Gastrocnemius medialis (tissue), 4 donors: ENCODE measurements at regions of chr19 and their contacts with region 1.

Region 1: DNA sequence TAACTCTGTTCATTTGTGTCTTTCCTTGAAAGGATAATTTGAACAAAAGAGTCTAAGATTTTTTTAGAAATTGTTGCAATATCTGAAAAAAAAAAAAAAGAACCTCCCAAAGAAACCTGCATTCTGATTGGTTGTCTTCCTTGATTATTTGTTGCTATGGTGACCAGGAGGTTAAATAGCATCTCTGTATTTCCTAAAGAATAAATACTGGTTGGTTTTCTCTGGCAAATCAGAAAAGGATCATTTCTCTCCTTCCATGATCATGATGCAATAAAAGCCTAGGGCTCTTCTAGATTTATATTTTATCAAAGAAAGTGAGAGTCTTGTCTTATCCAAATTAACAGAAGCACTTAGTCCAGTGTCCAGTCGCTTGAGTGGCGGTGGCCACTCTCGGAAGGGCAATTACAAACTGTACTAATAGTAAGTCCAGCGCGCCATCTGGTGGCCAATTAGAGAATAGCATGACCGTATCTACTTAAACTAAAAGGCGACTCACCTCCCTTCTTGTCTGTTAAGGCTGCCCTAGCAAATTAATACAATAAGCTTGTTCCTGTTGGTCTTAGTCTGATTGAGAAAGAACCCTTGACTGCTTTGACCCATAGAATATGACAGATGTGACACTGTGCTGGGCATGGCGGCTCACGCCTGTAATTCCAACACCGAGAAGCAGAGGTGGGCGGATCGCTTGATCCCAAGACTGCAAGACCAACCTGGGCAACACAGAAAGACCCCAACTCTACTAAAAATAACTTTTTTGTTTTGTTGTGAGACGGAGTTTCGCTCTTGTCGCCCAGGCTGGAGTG is 47.0 kb upstream of the PNMA8B start:
- DNase-seq: peak; percentile 76 to 87
- ATAC-seq: peak; percentile 79 to 91
- H3K4me3 ChIP-seq: no peak overlapping the region
- H3K27ac ChIP-seq: no peak overlapping the region
- H3K4me1 ChIP-seq: peaks cover 0 to 5% of the 10 kb centered on the region in 2 donors
- H3K27me3 ChIP-seq: no peaks in the 10 kb centered on the region
- CTCF ChIP-seq: peak; percentile 89 to 91 (median 90)
- POLR2A ChIP-seq: no peak

Region 2: GRCh38 chr19:46471116-46471733 is 71.4 kb before region 1 on chr19 and contains the start of gene PNMA8A:
- in situ Hi-C with region 1: no loop called
- intact Hi-C with region 1: no loop called
- DNase-seq: peak in 1 of 2 donors; percentile 20
- ATAC-seq: peak; percentile 33 to 57
- H3K4me3 ChIP-seq: peak within 1 kb of the TSS; percentile 30 to 53 (median 46)
- H3K27ac ChIP-seq: peak within 1 kb of the TSS; percentile 28 to 55 (median 36)
- H3K4me1 ChIP-seq: peaks cover 0 to 3% of the 10 kb centered on the region in 2 donors
- H3K27me3 ChIP-seq: peaks cover 0 to 15% (median 3%) of the 10 kb centered on the region in 3 donors
- CTCF ChIP-seq: no peak
- POLR2A ChIP-seq: no peak
- total RNA-seq, gene PNMA8A: 0.13 to 0.83 (median 0.60) TPM in 3 of 4 donors, not detected in the other

Region 3: DNA sequence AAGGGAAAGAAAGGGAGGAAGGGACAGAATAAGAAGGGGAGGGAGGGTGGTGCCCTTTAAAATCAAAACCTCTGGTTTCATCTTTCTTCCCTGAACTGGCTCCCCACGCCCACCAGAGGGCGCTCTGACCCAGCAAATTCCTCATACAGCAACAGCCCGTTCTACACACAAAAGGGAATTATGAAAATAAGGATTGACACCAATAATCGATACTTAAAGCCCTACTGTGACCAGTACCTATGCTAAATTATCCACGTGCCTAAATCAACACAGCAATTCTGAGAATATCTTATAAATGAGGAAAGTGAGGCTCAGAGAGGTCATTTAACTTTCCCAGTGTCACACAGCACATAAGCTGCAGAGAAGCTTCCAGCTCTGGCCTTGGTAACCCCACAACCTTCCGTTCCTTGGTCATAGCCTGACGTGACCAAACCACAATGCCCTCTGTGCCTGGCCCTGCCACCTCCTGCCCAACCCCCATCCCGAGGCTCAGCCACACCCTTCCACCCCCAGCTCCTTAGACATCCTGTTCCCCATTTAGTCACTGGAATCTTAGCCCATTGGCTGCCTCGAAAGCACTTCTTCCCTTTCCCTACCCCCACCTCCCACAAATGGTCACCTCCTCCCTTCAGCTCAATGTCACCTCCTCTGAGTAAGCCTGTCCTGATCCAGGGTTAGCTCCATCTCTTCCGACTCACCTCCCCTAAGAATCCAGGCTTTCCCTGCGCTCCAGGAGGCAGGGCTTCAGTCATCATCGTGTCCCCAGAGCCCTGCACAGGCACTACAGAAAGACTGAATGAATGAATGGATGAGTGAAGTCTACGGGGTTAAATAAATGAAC is 12.8 kb before region 1 on chr19:
- in situ Hi-C with region 1: no loop called
- intact Hi-C with region 1: loop called (anchors 1 kb)
- DNase-seq: peak; percentile 34 to 47
- ATAC-seq: peak; percentile 30 to 54
- H3K4me3 ChIP-seq: no peak overlapping the region
- H3K27ac ChIP-seq: no peak overlapping the region
- H3K4me1 ChIP-seq: no peaks in the 10 kb centered on the region
- H3K27me3 ChIP-seq: peaks cover 11 to 19% (median 11%) of the 10 kb centered on the region in 3 donors
- CTCF ChIP-seq: peak; percentile 77 to 86 (median 83)
- POLR2A ChIP-seq: no peak